GM12878 (cell line): ENCODE measurements at regions of chr12 and their contacts with region 1.

Region 1: GRCh38 chr12:130335517-130336392 is 1.9 kb upstream of the PIWIL1 start:
- DNase-seq: peak; percentile 3
- ATAC-seq: peak; percentile 56; the same call in 1 of the 3 replicates
- H3K4me3 ChIP-seq: no peak overlapping the region
- H3K27ac ChIP-seq: no peak overlapping the region
- H3K4me1 ChIP-seq: no peaks in the 10 kb centered on the region
- H3K27me3 ChIP-seq: no peaks in the 10 kb centered on the region
- CTCF ChIP-seq: peak; percentile 37 to 71 (median 58); a peak in 5 of 6 replicates
- EP300 ChIP-seq: no peak
- POLR2A ChIP-seq: no peak
- RAD21 ChIP-seq: peak; percentile 73

Region 2: GRCh38 chr12:130031571-130032189 is 304.1 kb before region 1 on chr12:
- CTCF ChIA-PET with region 1: interaction called, 6 read pairs
- POLR2A ChIA-PET with region 1: no interaction called
- RAD21 ChIA-PET with region 1: no interaction called
- SMC1A ChIA-PET with region 1: no interaction called
- in situ Hi-C with region 1: no loop called
- intact Hi-C with region 1: loop called (anchors 5 kb)
- DNase-seq: no peak
- ATAC-seq: peak; percentile 85
- H3K4me3 ChIP-seq: no peak overlapping the region
- H3K27ac ChIP-seq: no peak overlapping the region
- H3K4me1 ChIP-seq: no peaks in the 10 kb centered on the region
- H3K27me3 ChIP-seq: no peaks in the 10 kb centered on the region
- CTCF ChIP-seq: peak; percentile 90 to 98 (median 92)
- EP300 ChIP-seq: no peak
- POLR2A ChIP-seq: no peak
- RAD21 ChIP-seq: peak; percentile 55

Region 3: DNA sequence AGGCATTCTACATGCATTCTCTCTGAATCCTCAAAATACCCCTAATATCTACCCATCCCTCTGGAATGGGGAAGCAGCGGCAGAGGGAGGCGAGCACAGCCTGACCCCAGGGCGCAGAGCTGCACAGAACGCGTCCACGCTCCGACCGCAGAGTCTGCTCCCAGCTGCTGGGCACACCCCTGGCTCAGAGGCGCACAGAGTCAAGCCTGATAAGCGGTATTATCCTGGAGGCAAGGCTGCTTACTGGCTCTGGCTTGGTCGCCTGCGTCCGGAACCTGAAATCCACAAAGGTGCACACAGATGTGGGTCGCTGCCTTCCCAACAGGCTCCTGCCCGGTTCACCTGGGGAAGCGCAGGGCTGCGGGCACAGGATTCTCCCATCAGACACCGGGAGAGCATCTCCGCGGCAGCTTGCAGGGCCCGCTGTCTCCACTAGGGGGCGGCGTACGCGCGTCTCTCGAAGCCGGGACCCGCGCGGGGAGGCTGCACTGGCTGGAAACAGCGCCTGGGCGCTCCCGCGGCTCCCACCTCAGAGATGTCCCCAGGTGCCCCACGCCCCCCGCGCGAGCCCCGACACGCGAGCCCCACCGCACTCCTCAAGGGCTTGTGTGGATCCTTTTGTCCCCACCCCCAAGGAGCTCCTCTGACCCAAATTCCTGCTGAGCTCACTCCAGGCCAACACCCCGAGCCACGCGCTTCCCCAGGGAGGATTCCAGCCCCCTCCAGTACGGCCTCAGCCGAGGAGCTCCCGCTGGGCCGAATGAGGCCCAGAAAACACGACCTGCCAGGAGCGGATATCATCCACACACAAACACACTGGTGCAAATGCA is 293.6 kb before region 1 on chr12:
- CTCF ChIA-PET with region 1: no interaction called
- POLR2A ChIA-PET with region 1: no interaction called
- RAD21 ChIA-PET with region 1: no interaction called
- SMC1A ChIA-PET with region 1: no interaction called
- in situ Hi-C with region 1: loop called (anchors 5 kb)
- intact Hi-C with region 1: loop called (anchors 1 kb)
- DNase-seq: no peak
- ATAC-seq: no peak
- H3K4me3 ChIP-seq: no peak overlapping the region
- H3K27ac ChIP-seq: no peak overlapping the region
- H3K4me1 ChIP-seq: no peaks in the 10 kb centered on the region
- H3K27me3 ChIP-seq: no peaks in the 10 kb centered on the region
- CTCF ChIP-seq: peak; percentile 22 to 46 (median 26); a peak in 5 of 6 replicates
- EP300 ChIP-seq: no peak
- POLR2A ChIP-seq: no peak
- RAD21 ChIP-seq: no peak

Region 4: GRCh38 chr12:130418251-130418650 is 82.5 kb after region 1 on chr12:
- CTCF ChIA-PET with region 1: no interaction called
- POLR2A ChIA-PET with region 1: no interaction called
- RAD21 ChIA-PET with region 1: no interaction called
- SMC1A ChIA-PET with region 1: no interaction called
- in situ Hi-C with region 1: no loop called
- intact Hi-C with region 1: no loop called
- DNase-seq: no peak
- ATAC-seq: no peak
- H3K4me3 ChIP-seq: no peak overlapping the region
- H3K27ac ChIP-seq: no peak overlapping the region
- H3K4me1 ChIP-seq: no peaks in the 10 kb centered on the region
- H3K27me3 ChIP-seq: no peaks in the 10 kb centered on the region
- CTCF ChIP-seq: no peak
- EP300 ChIP-seq: no peak
- POLR2A ChIP-seq: no peak
- RAD21 ChIP-seq: no peak

Region 5: GRCh38 chr12:130728158-130729058 is 392.7 kb after region 1 on chr12:
- CTCF ChIA-PET with region 1: no interaction called
- POLR2A ChIA-PET with region 1: no interaction called
- RAD21 ChIA-PET with region 1: no interaction called
- SMC1A ChIA-PET with region 1: no interaction called
- in situ Hi-C with region 1: no loop called
- intact Hi-C with region 1: no loop called
- DNase-seq: no peak
- ATAC-seq: no peak
- H3K4me3 ChIP-seq: no peak overlapping the region
- H3K27ac ChIP-seq: no peak overlapping the region
- H3K4me1 ChIP-seq: no peaks in the 10 kb centered on the region
- H3K27me3 ChIP-seq: no peaks in the 10 kb centered on the region
- CTCF ChIP-seq: no peak
- EP300 ChIP-seq: no peak
- POLR2A ChIP-seq: no peak
- RAD21 ChIP-seq: no peak